ENCODE measurements at regions of chr18 and their contacts with region 1.

Region 1: GRCh38 chr18:11851146-11851805 is at the start of gene CHMP1B:
- DNase-seq: peak; percentile 99
- H3K4me3 ChIP-seq: peak within 1 kb of the TSS; percentile 66 to 94 (median 82)
- H3K27ac ChIP-seq: peak within 1 kb of the TSS; percentile 86 to 96 (median 94)
- H3K4me1 ChIP-seq: peaks cover 31 to 47% (median 42%) of the 10 kb centered on the region in 4 donors
- H3K27me3 ChIP-seq: no peaks in the 10 kb centered on the region
- CTCF ChIP-seq: peak in 1 of 3 experiments; percentile 22
- EP300 ChIP-seq: peak; percentile 13
- POLR2A ChIP-seq: peak; percentile 96
- total RNA-seq, gene CHMP1B: 42.0 to 58.6 (median 49.7) TPM

Region 2: GRCh38 chr18:11785458-11786055 is 65.7 kb before region 1 on chr18:
- intact Hi-C with region 1: no loop called
- DNase-seq: no peak
- H3K4me3 ChIP-seq: no peak overlapping the region
- H3K27ac ChIP-seq: no peak overlapping the region
- H3K4me1 ChIP-seq: peaks cover 3 to 15% (median 12%) of the 10 kb centered on the region in 4 donors
- H3K27me3 ChIP-seq: no peaks in the 10 kb centered on the region
- CTCF ChIP-seq: no peak
- EP300 ChIP-seq: no peak
- POLR2A ChIP-seq: no peak

Region 3: GRCh38 chr18:11908182-11909060 is 57.1 kb after region 1 on chr18 and contains the start of gene MPPE1:
- intact Hi-C with region 1: loop called (anchors 5 kb)
- DNase-seq: peak; percentile 94
- H3K4me3 ChIP-seq: peak within 1 kb of the TSS; percentile 71 to 92 (median 80)
- H3K27ac ChIP-seq: peak within 1 kb of the TSS; percentile 95 to 100 (median 99)
- H3K4me1 ChIP-seq: peaks cover 18 to 23% (median 22%) of the 10 kb centered on the region in 4 donors
- H3K27me3 ChIP-seq: no peaks in the 10 kb centered on the region
- CTCF ChIP-seq: peak in 1 of 3 experiments; percentile 3
- EP300 ChIP-seq: no peak
- POLR2A ChIP-seq: peak; percentile 87
- total RNA-seq, gene MPPE1: 10.9 to 30.2 (median 24.4) TPM

Region 4: GRCh38 chr18:12552884-12553242 is 701.6 kb after region 1 on chr18:
- intact Hi-C with region 1: no loop called
- DNase-seq: no peak
- H3K4me3 ChIP-seq: no peak overlapping the region
- H3K27ac ChIP-seq: no peak overlapping the region
- H3K4me1 ChIP-seq: peaks cover 7 to 17% (median 10%) of the 10 kb centered on the region in 4 donors
- H3K27me3 ChIP-seq: no peaks in the 10 kb centered on the region
- CTCF ChIP-seq: no peak
- EP300 ChIP-seq: no peak
- POLR2A ChIP-seq: no peak

Measured in esophagus muscularis mucosa (tissue), 4 donors.